GM10248 (cell line): ENCODE measurements at regions of chr17 and their contacts with region 1.

Region 1: GRCh38 chr17:68273722-68274121 is 17.2 kb downstream of the SLC16A6 start:
- DNase-seq: no peak
- CTCF ChIP-seq: no peak

Region 2: DNA sequence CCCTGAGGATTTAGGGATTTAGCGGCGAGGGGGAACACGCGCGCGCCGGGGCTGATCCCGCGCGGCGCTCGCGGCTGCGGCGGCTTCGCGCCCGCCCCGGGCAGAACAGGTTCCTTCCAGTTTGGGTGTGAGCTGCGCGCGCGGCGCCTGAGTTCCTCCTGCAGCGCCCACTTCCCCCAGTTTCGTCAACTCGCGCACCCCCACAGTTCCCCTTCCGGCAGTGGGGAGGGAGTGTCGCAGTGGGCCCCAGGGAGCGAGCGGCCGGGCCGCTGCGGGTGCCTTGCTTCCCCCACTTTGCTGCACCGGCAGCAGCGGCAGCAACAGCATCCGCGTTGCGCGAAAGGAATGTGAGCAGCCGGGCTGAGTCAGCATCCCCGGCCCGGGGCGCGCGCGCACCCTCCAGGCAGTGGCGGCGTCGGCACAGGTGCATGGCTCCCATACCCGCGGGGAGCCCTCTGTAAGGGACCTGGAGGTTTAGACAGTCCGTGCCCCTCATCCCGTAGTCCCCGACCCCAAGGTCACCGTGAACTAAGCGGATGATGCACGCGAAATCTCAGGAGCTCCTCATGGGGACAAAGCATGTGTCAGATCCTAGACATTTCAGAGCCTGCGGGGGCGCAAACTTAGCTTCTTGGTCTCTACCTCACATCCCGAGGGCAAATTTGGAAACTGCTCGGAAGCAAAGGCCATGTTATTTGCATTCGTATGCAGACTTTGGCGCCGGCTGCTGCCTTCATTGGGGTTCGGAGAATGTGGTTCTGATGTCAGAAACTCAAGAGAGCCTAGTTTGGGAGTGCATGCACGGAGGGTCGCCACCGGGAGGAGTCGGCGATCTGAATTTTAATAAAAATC is 18.3 kb after region 1 on chr17:
- CTCF ChIA-PET with region 1: interaction called, 13 read pairs
- POLR2A ChIA-PET with region 1: no interaction called
- DNase-seq: peak; percentile 90
- CTCF ChIP-seq: no peak